Astrocyte of the cerebellum (primary cell): ENCODE measurements at regions of chr9 and their contacts with region 1.

Region 1: DNA sequence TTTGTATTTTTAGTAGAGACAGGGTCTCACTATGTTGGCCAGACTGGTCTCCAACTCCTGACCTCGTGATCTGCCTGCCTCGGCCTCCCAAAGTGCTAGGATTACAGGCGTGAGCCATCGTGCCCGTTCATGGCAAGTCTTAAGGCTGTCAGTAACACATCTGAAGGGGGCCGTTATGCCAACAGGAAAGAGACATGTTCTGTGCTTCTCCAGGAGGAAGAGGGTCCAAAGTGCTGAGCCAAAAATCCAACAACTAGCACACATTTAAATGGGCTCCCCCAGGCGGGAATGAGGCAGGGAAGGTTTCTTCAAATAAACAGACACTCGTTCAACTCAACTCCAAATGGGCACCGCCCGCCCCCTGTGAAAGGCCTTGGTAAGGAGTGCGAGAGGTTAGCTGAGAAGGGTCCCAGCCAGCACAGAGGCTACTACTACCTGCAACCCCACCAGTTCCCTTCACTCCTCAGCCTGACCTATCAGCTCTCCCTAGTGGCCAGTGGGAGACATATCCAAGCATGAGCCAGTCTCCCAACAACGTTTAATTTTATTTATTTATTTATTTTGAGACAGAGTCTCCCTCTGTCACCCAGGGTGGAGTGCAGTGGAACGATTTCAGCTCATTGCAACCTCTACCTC is 84.1 kb upstream of the DMRT1 start:
- DNase-seq: no peak
- H3K4me3 ChIP-seq: no peak overlapping the region
- CTCF ChIP-seq: peak; percentile 67

Region 2: GRCh38 chr9:546797-547223 is 210.6 kb before region 1 on chr9:
- in situ Hi-C with region 1: no loop called
- DNase-seq: no peak
- H3K4me3 ChIP-seq: no peak overlapping the region
- CTCF ChIP-seq: peak; percentile 39

Region 3: DNA sequence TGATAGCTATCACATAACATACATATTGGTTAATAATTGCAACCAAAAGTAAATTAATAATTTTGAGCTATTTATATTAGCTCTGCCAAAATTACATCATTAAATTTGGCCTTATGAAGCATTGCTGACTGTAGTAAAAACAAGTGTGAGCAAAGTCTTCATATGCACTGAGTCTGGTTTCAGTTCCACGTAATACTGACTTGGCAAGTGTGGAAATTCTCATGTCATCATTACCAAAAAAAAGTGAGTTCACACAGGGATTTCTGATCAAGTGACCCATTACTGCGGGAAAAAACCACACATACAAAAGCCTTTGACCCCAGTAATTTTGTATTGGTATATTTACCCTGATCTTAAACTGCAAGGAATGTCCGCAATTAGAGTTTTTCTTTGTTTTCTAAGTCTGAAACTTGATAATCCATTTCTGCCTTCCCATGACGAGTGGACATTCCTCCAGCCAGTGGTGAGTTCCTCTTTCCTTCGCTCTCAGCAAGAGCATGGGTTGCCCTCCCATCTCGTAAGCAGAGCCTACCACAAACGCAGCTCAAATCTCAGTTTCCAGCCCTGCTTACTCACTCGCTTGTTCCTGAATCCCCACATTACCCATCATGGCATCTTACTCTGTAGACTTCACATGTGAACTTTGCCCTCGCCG is 136.0 kb before region 1 on chr9:
- in situ Hi-C with region 1: loop called (anchors 5 kb)
- DNase-seq: no peak
- H3K4me3 ChIP-seq: no peak overlapping the region
- CTCF ChIP-seq: no peak

Region 4: DNA sequence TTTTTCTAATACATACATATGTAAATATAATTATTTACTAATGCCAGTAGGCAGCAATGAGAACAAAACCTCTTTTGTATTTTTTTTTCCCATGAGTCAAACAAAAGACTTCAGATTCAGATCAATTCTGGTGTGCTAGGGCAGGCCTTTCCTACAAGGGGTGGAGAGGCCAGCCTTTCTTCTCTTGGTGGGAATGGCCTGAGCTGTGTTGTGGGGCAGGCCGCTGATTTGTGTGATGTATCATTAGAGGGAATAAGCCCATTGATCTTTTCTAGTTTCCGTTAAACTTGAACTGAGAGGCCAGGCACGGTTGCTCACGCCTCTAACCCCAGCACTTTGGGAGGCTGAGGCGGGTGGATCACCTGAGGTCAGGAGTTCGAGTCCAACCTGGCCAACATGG is 31.3 kb before region 1 on chr9:
- in situ Hi-C with region 1: no loop called
- DNase-seq: no peak
- H3K4me3 ChIP-seq: no peak overlapping the region
- CTCF ChIP-seq: no peak